Cardiac septum (tissue), 1 donor: ENCODE measurements at regions of chr21 and their contacts with region 1.

Region 1: GRCh38 chr21:32940079-32941014 is 85.4 kb upstream of the OLIG2 start:
- DNase-seq: no peak

Region 2: DNA sequence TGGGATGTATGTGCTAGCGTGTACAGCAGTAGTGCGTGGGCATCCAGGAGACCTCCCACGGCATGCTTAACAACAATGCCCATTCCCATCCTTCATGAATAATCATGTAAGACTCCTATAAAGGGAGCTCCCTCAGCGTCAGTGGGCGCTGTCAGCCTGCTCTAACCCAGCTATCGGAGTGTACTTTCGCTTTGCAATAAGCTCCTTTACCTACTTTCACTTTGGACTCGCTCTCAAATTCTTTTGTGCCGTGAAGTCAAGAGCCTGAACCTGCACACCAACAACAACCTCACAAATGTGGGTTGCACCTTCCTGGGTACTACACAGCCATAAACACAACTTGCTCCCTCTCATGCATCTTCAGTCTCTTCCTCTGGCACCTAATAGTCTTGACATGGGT is 54.0 kb before region 1 on chr21:
- intact Hi-C with region 1: no loop called
- DNase-seq: no peak

Region 3: DNA sequence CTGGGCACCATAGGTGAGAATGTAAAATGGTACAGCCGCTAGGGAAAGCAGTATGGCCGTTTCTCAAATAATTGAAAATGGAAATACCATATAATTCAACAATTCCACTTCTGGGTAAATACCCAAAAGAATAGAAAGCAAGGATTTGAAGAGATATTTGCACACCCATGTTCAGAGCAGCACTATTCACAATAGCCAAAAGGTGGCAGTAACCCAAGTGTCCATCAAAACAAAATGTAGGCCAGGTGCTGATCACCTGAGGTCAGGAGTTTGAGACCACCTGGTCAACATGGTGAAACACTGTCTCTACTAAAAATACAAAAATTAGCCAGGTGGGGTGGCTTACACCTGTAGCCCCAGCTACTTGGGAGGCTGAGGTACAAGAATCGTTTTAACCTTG is 191.7 kb after region 1 on chr21:
- intact Hi-C with region 1: loop called (anchors 10 kb)
- DNase-seq: no peak

Region 4: DNA sequence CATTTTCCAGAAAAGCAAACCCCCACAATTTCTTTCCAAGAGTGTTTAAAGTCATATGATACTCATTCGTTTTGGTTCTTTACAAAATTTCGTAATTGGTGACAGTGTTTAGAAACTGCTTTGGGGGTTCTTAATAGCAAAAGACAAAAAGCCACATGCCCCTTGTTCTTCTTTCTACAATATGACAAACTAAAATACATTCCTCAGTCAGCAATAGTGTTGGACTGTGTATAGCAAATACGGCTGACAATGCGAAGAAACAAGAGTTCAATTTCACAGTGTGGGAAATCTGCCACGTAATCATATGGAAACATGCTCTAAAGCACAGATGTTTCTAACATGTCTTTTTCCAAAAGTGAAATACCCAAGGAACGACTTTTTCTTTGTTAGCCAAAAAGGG is 376.8 kb after region 1 on chr21:
- intact Hi-C with region 1: no loop called
- DNase-seq: no peak